Calu3 (cell line): ENCODE measurements at regions of chr6 and their contacts with region 1.

Region 1: DNA sequence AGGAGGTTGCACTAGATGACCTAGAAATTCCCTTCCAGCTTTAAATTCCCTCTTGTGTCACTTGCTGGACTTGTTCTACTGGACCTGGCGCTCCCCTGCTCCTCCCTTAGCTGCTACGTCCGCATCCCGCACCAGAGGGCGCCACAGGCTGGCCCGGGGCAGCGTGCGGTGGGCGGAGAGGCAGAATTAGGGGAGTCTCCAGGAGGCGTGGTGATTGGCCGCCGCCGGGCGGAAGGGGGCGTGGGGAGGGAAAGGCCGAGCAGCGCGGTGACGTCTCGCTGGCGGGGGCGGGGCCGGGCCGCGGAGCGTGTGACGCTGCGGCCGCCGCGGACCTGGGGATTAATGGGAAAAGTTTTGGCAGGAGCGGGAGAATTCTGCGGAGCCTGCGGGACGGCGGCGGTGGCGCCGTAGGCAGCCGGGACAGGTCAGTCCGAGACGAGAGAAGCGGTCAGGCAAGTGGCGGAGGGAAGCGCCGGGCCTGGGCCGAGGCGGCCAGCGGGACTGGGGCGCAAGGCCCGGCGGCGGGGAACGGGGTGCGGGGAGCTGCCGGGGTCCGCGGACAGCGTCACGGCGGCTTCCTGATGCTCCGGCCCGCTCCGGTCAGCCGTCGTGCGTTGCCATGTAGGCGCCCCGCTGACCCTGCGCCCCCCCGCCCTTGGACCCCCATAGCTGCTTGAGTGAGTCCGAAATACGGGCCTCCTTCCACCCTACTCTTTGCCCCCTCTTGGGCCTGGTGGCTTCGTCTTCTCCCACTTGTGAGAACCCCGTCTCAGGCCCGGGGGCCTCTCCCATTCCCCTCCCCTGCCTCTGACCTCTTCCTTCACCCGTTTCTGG is at the start of gene PPARD:
- DNase-seq: peak; percentile 100
- H3K4me3 Mint-ChIP-seq: peak within 1 kb of the TSS; percentile 83
- H3K27ac Mint-ChIP-seq: peak within 1 kb of the TSS; percentile 82
- H3K4me1 Mint-ChIP-seq: peaks cover 17% of the 10 kb centered on the region
- H3K27me3 Mint-ChIP-seq: peaks cover 19% of the 10 kb centered on the region
- CTCF ChIP-seq: peak; percentile 98
- total RNA-seq, gene PPARD: 26.2 and 26.8 TPM in 2 replicates

Region 2: GRCh38 chr6:35297601-35298481 is 44.6 kb before region 1 on chr6 and contains the start of gene DEF6:
- CTCF ChIA-PET with region 1: interaction called, 6 read pairs
- intact Hi-C with region 1: loop called (anchors 5 kb)
- DNase-seq: peak; percentile 93
- H3K4me3 Mint-ChIP-seq: peak within 1 kb of the TSS; percentile 62
- H3K27ac Mint-ChIP-seq: no peak within 1 kb of the TSS
- H3K4me1 Mint-ChIP-seq: peaks cover 15% of the 10 kb centered on the region
- H3K27me3 Mint-ChIP-seq: no peaks in the 10 kb centered on the region
- CTCF ChIP-seq: peak; percentile 82
- total RNA-seq, gene DEF6: 15.4 and 18.5 TPM in 2 replicates

Region 3: GRCh38 chr6:35318196-35319171 is 24.0 kb before region 1 on chr6:
- CTCF ChIA-PET with region 1: interaction called, 15 read pairs
- intact Hi-C with region 1: no loop called
- DNase-seq: peak; percentile 98
- H3K4me3 Mint-ChIP-seq: peak overlapping the region; percentile 91
- H3K27ac Mint-ChIP-seq: peak overlapping the region; percentile 34
- H3K4me1 Mint-ChIP-seq: peaks cover 9% of the 10 kb centered on the region
- H3K27me3 Mint-ChIP-seq: no peaks in the 10 kb centered on the region
- CTCF ChIP-seq: peak; percentile 9

Region 4: DNA sequence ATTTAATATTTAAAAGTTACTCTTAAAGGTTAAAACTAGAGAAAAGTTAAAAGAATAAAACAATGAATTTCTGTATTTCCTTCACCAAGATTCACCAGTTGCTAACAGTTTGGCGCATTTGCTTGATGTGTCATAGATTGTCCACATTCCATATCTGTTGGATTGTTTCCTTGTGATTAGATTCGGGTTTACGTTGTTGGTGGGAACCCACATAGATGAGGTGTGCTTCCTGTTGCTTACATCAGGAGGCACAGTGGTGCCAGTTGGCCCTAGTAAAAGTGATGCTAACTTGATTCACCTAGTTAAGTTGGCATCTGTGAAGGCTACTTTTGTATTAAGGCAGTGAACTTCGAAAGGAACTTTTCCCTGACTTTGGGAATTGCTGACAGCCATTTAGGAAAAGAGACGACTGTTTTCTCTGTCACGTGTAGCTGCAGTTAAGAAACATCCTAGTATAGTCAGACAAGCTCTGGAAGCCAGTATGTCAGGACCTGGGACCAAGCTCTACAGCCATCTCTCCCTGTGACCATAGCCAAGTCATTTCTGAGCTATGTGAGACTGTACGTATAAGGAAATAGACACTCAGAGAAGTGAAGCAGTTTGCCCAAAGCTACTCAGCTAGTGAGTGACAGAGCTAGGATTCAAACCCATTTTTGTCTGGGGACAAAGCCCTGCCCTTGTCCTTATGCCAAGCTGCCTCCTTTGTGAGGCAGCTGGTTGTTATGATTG is 48.9 kb after region 1 on chr6:
- CTCF ChIA-PET with region 1: interaction called, 3 read pairs
- intact Hi-C with region 1: loop called (anchors 1 kb)
- DNase-seq: peak; percentile 71
- H3K4me3 Mint-ChIP-seq: no peak overlapping the region
- H3K27ac Mint-ChIP-seq: peak overlapping the region; percentile 62
- H3K4me1 Mint-ChIP-seq: peaks cover 67% of the 10 kb centered on the region
- H3K27me3 Mint-ChIP-seq: no peaks in the 10 kb centered on the region
- CTCF ChIP-seq: no peak

Region 5: GRCh38 chr6:35415065-35415991 is 72.9 kb after region 1 on chr6:
- CTCF ChIA-PET with region 1: interaction called, 61 read pairs
- intact Hi-C with region 1: loop called (anchors 1 kb)
- DNase-seq: peak; percentile 77
- H3K4me3 Mint-ChIP-seq: no peak overlapping the region
- H3K27ac Mint-ChIP-seq: no peak overlapping the region
- H3K4me1 Mint-ChIP-seq: peaks cover 13% of the 10 kb centered on the region
- H3K27me3 Mint-ChIP-seq: no peaks in the 10 kb centered on the region
- CTCF ChIP-seq: peak; percentile 74

Region 6: GRCh38 chr6:35452186-35453090 is 110.0 kb after region 1 on chr6 and contains the start of gene FANCE:
- CTCF ChIA-PET with region 1: interaction called, 55 read pairs
- intact Hi-C with region 1: loop called (anchors 1 kb)
- DNase-seq: peak; percentile 99
- H3K4me3 Mint-ChIP-seq: peak within 1 kb of the TSS; percentile 79
- H3K27ac Mint-ChIP-seq: no peak within 1 kb of the TSS
- H3K4me1 Mint-ChIP-seq: peaks cover 26% of the 10 kb centered on the region
- H3K27me3 Mint-ChIP-seq: peaks cover 27% of the 10 kb centered on the region
- CTCF ChIP-seq: no peak
- total RNA-seq, gene FANCE: 10.4 and 10.9 TPM in 2 replicates

Region 7: DNA sequence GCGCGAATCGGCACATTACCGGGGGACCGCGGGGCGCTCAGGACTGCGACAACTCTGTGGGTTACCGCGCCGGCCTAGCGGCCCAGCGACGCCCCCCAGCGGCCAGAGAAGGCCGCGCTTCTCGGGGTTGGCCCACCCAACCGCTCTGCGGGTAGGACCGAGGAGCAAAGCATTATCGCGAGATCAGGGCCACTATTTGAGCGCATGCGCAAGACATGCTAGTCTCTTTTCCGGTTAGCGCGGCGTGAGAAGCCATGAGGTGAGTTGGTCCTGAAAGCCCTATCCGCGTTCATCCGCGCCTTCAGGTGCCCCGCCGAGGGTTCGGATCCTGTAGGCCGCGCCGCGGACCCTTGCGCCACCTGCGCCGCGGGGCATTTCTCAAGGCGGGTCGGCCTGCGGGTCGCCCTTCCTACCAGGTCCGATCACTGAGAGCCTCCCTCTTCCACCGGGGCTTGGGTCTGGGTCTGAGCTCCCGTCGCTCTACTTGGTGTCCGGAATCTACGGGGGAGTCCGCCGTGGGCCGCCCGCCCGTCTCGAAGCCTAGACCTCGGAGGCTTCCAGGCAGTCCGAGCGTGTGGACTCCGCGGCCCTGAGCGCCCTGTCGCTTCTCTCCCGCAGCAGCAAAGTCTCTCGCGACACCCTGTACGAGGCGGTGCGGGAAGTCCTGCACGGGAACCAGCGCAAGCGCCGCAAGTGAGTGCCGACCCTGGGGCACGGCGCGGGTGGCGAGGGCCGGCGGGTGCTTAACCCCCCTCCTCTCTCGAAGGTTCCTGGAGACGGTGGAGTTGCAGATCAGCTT is 125.9 kb after region 1 on chr6 and contains the start of gene RPL10A:
- CTCF ChIA-PET with region 1: interaction called, 5 read pairs
- intact Hi-C with region 1: loop called (anchors 5 kb)
- DNase-seq: peak; percentile 95
- H3K4me3 Mint-ChIP-seq: peak within 1 kb of the TSS; percentile 98
- H3K27ac Mint-ChIP-seq: peak within 1 kb of the TSS; percentile 100
- H3K4me1 Mint-ChIP-seq: peaks cover 33% of the 10 kb centered on the region
- H3K27me3 Mint-ChIP-seq: no peaks in the 10 kb centered on the region
- CTCF ChIP-seq: peak; percentile 96
- total RNA-seq, gene RPL10A: 789 and 828 TPM in 2 replicates